Activated CD4-positive, alpha-beta memory T cell treated with anti-CD3 and anti-CD28 coated beads for 36 hours (primary cell): ENCODE measurements at regions of chr1 and their contacts with region 1.

Region 1: GRCh38 chr1:40774266-40774998 is 9.2 kb upstream of the KCNQ4 start:
- DNase-seq: peak; percentile 74
- H3K4me3 Mint-ChIP-seq: no peak overlapping the region
- H3K27ac Mint-ChIP-seq: no peak overlapping the region
- H3K4me1 Mint-ChIP-seq: no peaks in the 10 kb centered on the region
- H3K27me3 Mint-ChIP-seq: no peaks in the 10 kb centered on the region

Region 2: GRCh38 chr1:40612345-40612831 is 162.0 kb before region 1 on chr1:
- CTCF ChIA-PET with region 1: interaction called, 7 read pairs
- POLR2A ChIA-PET with region 1: no interaction called
- intact Hi-C with region 1: loop called (anchors 5 kb)
- DNase-seq: peak; percentile 79
- H3K4me3 Mint-ChIP-seq: no peak overlapping the region
- H3K27ac Mint-ChIP-seq: no peak overlapping the region
- H3K4me1 Mint-ChIP-seq: no peaks in the 10 kb centered on the region
- H3K27me3 Mint-ChIP-seq: no peaks in the 10 kb centered on the region

Region 3: GRCh38 chr1:40755067-40755466 is 19.4 kb before region 1 on chr1:
- CTCF ChIA-PET with region 1: interaction called, 28 read pairs
- POLR2A ChIA-PET with region 1: no interaction called
- intact Hi-C with region 1: no loop called
- DNase-seq: no peak
- H3K4me3 Mint-ChIP-seq: no peak overlapping the region
- H3K27ac Mint-ChIP-seq: no peak overlapping the region
- H3K4me1 Mint-ChIP-seq: peaks cover 25% of the 10 kb centered on the region
- H3K27me3 Mint-ChIP-seq: no peaks in the 10 kb centered on the region

Region 4: GRCh38 chr1:40763742-40764532 is 10.5 kb before region 1 on chr1:
- CTCF ChIA-PET with region 1: interaction called, 62 read pairs
- POLR2A ChIA-PET with region 1: interaction called, 6 read pairs
- intact Hi-C with region 1: no loop called
- DNase-seq: peak; percentile 18
- H3K4me3 Mint-ChIP-seq: no peak overlapping the region
- H3K27ac Mint-ChIP-seq: peak overlapping the region; percentile 78
- H3K4me1 Mint-ChIP-seq: peaks cover 32% of the 10 kb centered on the region
- H3K27me3 Mint-ChIP-seq: no peaks in the 10 kb centered on the region

Region 5: GRCh38 chr1:40789675-40790430 is 15.4 kb after region 1 on chr1:
- CTCF ChIA-PET with region 1: interaction called, 10 read pairs
- POLR2A ChIA-PET with region 1: no interaction called
- intact Hi-C with region 1: no loop called
- DNase-seq: no peak
- H3K4me3 Mint-ChIP-seq: no peak overlapping the region
- H3K27ac Mint-ChIP-seq: no peak overlapping the region
- H3K4me1 Mint-ChIP-seq: no peaks in the 10 kb centered on the region
- H3K27me3 Mint-ChIP-seq: peaks cover 12% of the 10 kb centered on the region

Region 6: DNA sequence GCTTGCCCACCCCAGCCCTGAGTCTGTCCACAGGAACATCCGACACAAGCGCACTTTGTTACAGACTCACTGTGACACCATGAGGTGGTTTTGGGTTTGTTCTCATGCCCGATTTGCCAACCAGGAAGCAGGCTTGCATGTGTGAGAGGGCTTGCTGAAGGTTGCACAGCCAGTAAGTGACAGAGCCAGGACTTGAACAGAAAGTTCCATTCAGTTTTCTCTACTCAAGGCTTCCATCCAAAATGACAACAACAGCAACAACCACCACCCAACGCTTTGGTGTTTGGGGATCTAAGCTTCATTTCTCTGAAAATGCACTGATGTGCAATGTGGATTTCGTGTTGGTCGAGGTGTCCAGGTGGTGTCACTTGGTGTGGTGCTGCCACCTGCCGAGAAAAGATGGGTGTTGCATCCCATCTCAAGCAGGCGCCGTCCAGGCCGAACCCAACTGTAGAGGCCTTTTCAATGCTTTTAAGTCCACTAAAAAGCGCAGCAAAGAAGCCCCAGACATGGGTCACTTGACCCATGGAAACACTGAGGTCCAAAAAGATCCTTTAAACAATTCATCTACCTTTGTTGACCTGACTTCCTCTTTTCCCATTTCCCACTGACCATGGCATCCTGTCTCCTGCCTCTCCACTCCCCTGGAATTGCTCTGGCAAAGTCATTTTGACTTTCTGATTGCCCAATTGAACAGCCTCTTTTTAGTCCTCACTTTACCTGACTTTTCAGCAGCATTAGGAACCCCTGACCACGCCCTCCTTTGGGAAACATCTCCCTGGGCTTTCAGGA is 75.6 kb after region 1 on chr1:
- CTCF ChIA-PET with region 1: interaction called, 179 read pairs
- POLR2A ChIA-PET with region 1: interaction called, 3 read pairs
- intact Hi-C with region 1: loop called (anchors 1 kb)
- DNase-seq: peak; percentile 86
- H3K4me3 Mint-ChIP-seq: no peak overlapping the region
- H3K27ac Mint-ChIP-seq: no peak overlapping the region
- H3K4me1 Mint-ChIP-seq: peaks cover 8% of the 10 kb centered on the region
- H3K27me3 Mint-ChIP-seq: no peaks in the 10 kb centered on the region